ENCODE measurements at regions of chr19 and their contacts with region 1.

Region 1: DNA sequence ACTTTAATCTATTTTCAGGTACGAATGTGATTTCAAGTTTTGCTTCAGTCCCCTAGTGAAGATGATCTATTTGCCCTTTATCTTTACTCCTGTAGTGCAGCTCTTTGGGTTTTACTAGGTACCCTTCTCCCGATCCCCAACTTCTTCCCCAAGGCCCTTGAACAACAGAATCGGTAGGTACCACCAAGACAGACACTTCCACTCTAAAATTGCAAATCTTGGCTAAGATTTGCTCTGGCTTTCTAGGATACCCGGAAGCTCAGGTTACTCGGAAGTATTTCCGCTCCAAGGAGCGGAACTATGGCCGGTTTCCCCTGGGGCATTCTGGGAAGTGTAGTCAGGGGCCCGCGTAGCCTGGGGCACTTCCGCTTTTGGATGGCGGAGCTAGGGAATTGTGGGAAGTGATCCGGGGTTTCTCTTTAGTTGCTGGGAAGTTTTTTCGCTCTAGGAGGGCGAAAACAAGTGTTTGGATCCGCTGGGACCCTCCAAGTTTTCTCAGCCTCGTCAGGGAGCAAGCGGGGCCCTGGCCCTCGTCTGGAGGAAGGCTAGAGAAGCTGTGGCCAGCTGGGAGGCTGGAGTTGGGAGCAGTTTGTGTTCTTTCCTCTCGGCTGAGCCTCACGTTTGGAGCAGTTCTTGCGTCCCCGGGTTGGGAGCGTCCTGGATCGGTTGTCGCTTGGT is 5.1 kb upstream of the ZNF227 start:
- DNase-seq: peak; percentile 86 to 90
- H3K4me3 ChIP-seq: peak overlapping the region; percentile 85
- H3K27ac ChIP-seq: no peak overlapping the region
- H3K4me1 ChIP-seq: peaks cover 7% of the 10 kb centered on the region
- H3K27me3 ChIP-seq: no peaks in the 10 kb centered on the region
- CTCF ChIP-seq: no peak

Region 2: GRCh38 chr19:44164673-44165512 is 42.4 kb before region 1 on chr19 and contains the start of gene ZNF226:
- CTCF ChIA-PET with region 1: no interaction called
- POLR2A ChIA-PET with region 1: interaction called, 11 read pairs
- intact Hi-C with region 1: loop called (anchors 1 kb)
- DNase-seq: peak; percentile 86 to 99
- H3K4me3 ChIP-seq: peak within 1 kb of the TSS; percentile 81
- H3K27ac ChIP-seq: peak within 1 kb of the TSS; percentile 20; the same call in 1 of the 2 replicates
- H3K4me1 ChIP-seq: peaks cover 13% of the 10 kb centered on the region
- H3K27me3 ChIP-seq: no peaks in the 10 kb centered on the region
- CTCF ChIP-seq: no peak
- total RNA-seq, gene ZNF226: 12.9 and 21.7 TPM in 2 replicates

Region 3: GRCh38 chr19:44315883-44316282 is 108.6 kb after region 1 on chr19:
- CTCF ChIA-PET with region 1: no interaction called
- POLR2A ChIA-PET with region 1: no interaction called
- intact Hi-C with region 1: no loop called
- DNase-seq: no peak
- H3K4me3 ChIP-seq: no peak overlapping the region
- H3K27ac ChIP-seq: no peak overlapping the region
- H3K4me1 ChIP-seq: no peaks in the 10 kb centered on the region
- H3K27me3 ChIP-seq: no peaks in the 10 kb centered on the region
- CTCF ChIP-seq: no peak

Region 4: DNA sequence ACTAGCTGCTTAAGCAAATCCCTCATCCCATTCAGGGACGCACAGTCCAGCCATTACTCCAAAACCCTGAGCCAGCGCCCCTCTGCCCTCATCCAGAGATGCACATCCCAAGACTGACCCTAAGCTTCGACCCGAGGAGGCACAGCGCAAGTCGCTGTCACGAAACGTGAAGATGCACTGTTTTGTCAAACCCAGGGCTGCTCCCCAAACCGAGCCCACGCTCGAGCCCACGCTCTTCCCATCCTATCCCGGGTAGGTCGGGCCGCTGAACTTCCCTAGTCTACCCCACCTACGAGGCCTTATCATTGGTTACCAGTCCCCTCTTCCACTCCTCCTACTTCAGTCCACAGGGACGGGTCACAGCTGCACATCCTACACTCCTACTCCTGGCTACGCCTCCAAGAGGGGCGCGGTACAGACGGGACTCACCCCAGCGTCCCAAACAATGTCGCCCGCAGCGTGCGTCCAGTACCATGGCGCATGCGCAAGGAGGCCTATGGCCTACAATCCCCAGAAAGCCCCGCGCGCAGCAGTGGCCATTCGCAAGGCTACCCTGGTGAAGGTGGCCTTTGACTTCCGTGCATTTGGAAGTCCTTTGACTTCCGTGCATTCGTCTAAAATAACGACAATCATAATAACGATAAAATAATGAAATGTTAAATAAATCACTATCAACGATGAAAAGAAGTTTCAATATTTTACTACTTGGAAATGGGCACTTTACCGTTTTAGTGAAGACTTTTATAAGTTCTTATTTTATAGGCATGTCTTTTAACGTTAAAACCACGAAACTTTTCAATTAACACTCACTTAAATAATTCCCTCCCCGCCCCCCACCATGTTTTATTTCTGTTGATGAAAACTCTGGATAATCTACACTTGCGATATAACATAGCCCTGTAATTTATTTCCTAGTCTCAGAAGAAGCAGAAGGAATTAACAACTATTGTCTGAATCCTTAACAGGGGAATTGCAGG is 194.2 kb after region 1 on chr19 and contains the start of gene ZNF285:
- CTCF ChIA-PET with region 1: no interaction called
- POLR2A ChIA-PET with region 1: no interaction called
- intact Hi-C with region 1: loop called (anchors 5 kb)
- DNase-seq: peak; percentile 88 to 95
- H3K4me3 ChIP-seq: peak within 1 kb of the TSS; percentile 78
- H3K27ac ChIP-seq: no peak within 1 kb of the TSS
- H3K4me1 ChIP-seq: peaks cover 4% of the 10 kb centered on the region; the same call in 1 of the 2 replicates
- H3K27me3 ChIP-seq: peaks cover 7% of the 10 kb centered on the region; the same call in 1 of the 2 replicates
- CTCF ChIP-seq: no peak
- total RNA-seq, gene ZNF285: 3.0 and 3.5 TPM in 2 replicates